Pancreas (tissue), 10 donors: ENCODE measurements at regions of chr17 and their contacts with region 1.

Region 1: GRCh38 chr17:7851438-7852256 is 3.2 kb upstream of the TMEM88 start:
- DNase-seq: peak; percentile 92 to 98 (median 96)
- ATAC-seq: peak; percentile 85 to 95 (median 92)
- H3K4me3 ChIP-seq: peak overlapping the region in 1 of 4 donors; percentile 21
- H3K27ac ChIP-seq: peak overlapping the region; percentile 15 to 46 (median 33)
- H3K4me1 ChIP-seq: peaks cover 0 to 9% (median 4%) of the 10 kb centered on the region in 3 donors
- H3K27me3 ChIP-seq: no peaks in the 10 kb centered on the region
- CTCF ChIP-seq: peak; percentile 92 to 98 (median 97)

Region 2: DNA sequence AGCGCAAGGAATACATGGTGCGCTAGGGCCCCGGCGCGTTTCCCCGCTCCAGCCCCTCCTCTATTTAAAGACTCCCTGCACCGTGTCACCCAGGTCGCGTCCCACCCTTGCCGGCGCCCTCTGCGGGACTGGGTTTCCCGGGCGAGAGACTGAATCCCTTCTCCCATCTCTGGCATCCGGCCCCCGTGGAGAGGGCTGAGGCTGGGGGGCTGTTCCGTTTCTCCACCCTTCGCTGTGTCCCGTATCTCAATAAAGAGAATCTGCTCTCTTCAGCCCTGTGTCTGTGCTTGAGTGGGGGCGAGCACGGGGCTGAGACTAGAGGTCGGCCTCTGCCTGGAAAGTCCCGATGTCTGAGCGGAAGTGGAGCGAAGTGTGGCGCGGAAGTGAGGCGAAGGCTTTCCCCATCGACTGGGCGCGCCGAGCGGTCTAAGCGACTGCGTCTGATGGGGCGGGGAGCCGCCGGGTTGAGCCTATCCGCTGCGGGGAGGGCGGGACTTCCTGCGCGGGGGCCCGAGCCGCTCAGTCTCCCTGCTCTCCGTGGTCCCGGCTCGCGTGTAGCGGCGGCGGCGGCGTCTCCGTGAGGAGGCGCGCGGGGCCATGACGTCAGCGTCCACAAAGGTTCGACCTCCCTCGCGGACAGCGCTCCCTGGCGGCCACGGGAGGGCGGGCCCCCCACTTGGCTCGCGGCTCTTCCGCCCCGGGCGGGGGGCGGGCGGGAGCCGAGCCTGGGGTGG is 837.2 kb before region 1 on chr17:
- intact Hi-C with region 1: no loop called
- DNase-seq: peak; percentile 96 to 99 (median 97)
- ATAC-seq: peak; percentile 86 to 88 (median 86)
- H3K4me3 ChIP-seq: peak overlapping the region; percentile 42 to 87 (median 76)
- H3K27ac ChIP-seq: peak overlapping the region; percentile 81 to 99 (median 97)
- H3K4me1 ChIP-seq: peaks cover 8 to 18% (median 15%) of the 10 kb centered on the region in 3 donors
- H3K27me3 ChIP-seq: no peaks in the 10 kb centered on the region
- CTCF ChIP-seq: peak; percentile 62 to 81 (median 72)

Region 3: GRCh38 chr17:7740481-7741001 is 111.1 kb before region 1 on chr17:
- intact Hi-C with region 1: loop called in 2 of 3 experiments (anchors 5 to 10 kb)
- DNase-seq: peak in 2 of 6 donors; percentile 52 to 54
- ATAC-seq: no peak
- H3K4me3 ChIP-seq: no peak overlapping the region
- H3K27ac ChIP-seq: no peak overlapping the region
- H3K4me1 ChIP-seq: no peaks in the 10 kb centered on the region
- H3K27me3 ChIP-seq: no peaks in the 10 kb centered on the region
- CTCF ChIP-seq: no peak